B cell (primary cell): ENCODE measurements at regions of chr4 and their contacts with region 1.

Region 1: GRCh38 chr4:112765317-112765975 is 128.5 kb downstream of the LARP7 start:
- DNase-seq: peak; percentile 43
- ATAC-seq: peak; percentile 41
- H3K4me3 ChIP-seq: no peak overlapping the region
- H3K4me3 Mint-ChIP-seq: no peak overlapping the region
- H3K27ac ChIP-seq: no peak overlapping the region
- H3K27ac Mint-ChIP-seq: no peak overlapping the region
- H3K4me1 ChIP-seq: no peaks in the 10 kb centered on the region
- H3K4me1 Mint-ChIP-seq: no peaks in the 10 kb centered on the region
- H3K27me3 ChIP-seq: no peaks in the 10 kb centered on the region
- H3K27me3 Mint-ChIP-seq: peaks cover 4% of the 10 kb centered on the region
- CTCF ChIP-seq: peak; percentile 74

Region 2: DNA sequence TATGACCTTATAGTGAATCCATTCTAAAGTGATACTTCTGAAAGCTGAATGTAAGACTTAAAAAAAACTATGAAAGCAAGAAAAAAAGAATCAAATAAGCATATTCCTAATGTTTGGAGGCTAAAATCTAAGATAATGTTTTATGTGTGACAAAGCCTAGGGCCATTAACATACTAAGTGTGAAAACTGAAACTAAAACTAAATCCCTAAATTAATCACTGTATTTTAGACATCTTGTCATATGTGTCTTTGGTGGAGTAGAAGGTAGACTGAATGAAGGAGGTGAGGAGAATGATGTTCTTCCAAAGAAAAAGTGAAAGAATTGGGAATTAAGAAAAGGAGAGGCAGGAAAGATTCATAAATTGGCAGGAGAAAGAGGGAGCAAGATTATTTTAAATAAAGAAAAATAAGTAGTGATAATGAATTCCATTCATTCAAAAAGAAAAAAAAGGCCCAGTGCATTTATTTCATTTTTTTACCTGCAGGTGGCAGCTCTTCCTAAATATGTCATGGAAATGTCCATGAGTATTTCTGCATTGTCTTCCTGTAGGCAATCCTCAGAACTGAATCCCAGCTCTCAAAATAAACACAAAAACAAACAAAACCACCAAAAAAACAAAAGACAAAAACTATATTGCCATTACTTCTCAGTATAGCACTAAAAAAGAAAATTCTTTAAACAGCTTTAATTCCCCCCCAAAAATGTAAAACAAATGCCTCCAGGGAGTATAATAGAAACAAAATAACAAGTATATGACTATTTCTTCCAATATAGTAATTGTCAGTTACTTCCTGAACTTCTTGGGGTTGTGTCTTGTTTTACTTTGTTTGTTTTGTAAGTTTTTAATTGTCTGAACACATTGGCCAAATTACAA is 550.8 kb before region 1 on chr4:
- CTCF ChIA-PET with region 1: interaction called, 7 read pairs
- POLR2A ChIA-PET with region 1: no interaction called
- intact Hi-C with region 1: loop called (anchors 10 kb)
- DNase-seq: peak; percentile 38
- ATAC-seq: no peak
- H3K4me3 ChIP-seq: no peak overlapping the region
- H3K4me3 Mint-ChIP-seq: no peak overlapping the region
- H3K27ac ChIP-seq: no peak overlapping the region
- H3K27ac Mint-ChIP-seq: no peak overlapping the region
- H3K4me1 ChIP-seq: no peaks in the 10 kb centered on the region
- H3K4me1 Mint-ChIP-seq: no peaks in the 10 kb centered on the region
- H3K27me3 ChIP-seq: no peaks in the 10 kb centered on the region
- H3K27me3 Mint-ChIP-seq: no peaks in the 10 kb centered on the region
- CTCF ChIP-seq: peak; percentile 70

Region 3: DNA sequence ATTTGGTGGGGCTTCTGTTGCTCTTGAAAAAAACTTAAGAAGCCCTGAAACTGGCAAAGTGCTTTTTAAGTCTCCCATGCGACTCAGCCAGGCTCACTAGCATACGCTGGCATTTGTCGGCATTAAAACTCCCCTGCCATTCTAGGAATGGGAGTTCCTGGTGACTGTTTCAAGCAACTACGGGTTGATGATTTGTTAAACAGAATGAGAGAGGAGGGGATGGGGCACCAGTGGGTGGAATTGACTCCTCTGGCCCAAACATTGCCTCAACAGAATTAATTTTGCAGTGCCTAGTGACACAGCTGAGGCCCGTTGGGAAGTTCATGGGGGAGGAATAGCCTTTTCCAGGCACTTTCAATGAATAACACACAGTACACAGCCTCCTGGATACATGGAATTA is 279.6 kb before region 1 on chr4:
- CTCF ChIA-PET with region 1: no interaction called
- POLR2A ChIA-PET with region 1: no interaction called
- intact Hi-C with region 1: no loop called
- DNase-seq: no peak
- ATAC-seq: no peak
- H3K4me3 ChIP-seq: no peak overlapping the region
- H3K4me3 Mint-ChIP-seq: no peak overlapping the region
- H3K27ac ChIP-seq: no peak overlapping the region
- H3K27ac Mint-ChIP-seq: no peak overlapping the region
- H3K4me1 ChIP-seq: no peaks in the 10 kb centered on the region
- H3K4me1 Mint-ChIP-seq: no peaks in the 10 kb centered on the region
- H3K27me3 ChIP-seq: peaks cover 0 to 13% (median 3%) of the 10 kb centered on the region in 4 experiments
- H3K27me3 Mint-ChIP-seq: peaks cover 17% of the 10 kb centered on the region
- CTCF ChIP-seq: no peak

Region 4: DNA sequence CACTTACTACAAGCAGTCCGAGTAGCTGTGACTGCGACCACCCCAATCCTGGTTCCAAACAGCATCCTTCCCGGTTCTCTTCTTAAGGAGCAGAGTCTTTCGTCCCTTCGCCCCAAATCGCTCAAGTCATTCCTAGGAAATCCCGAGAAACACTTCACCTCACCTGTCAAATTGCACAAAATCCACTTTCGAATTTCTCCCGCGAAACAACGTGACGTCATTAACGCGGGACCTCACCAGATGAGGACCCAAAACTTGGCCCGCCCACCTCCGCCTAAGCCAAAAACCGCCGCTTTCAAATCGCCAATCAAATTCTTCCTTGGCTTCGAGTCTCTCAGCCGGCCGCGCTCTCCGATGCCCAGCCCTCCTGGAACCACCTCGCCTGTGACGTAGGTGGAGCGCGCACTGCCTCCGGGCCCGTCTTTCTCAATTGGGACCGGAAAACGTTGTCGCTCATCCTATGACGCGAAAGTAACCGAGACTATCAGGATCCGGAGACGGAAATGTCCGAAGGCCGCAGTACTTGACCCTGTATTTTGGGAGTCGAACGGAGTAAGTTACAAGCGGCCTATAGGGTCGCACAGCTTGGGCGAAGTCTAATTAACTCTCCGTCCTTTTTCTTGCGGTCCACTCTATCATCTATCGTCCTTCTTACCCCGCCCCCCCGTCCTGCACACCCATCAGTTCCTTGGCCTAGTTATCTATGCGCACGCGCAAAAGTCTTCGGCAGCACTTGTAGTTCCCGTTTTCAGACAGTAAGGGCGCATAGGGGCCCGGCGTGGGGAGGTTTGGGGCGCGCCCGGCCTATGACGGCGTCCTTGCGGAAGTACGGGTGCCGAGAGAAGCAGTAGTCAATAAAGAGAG is 128.5 kb before region 1 on chr4 and contains the starts of genes LARP7 and ZGRF1:
- CTCF ChIA-PET with region 1: interaction called, 78 read pairs
- POLR2A ChIA-PET with region 1: no interaction called
- intact Hi-C with region 1: loop called (anchors 1 kb)
- DNase-seq: peak; percentile 99
- ATAC-seq: peak; percentile 86
- H3K4me3 ChIP-seq: peak within 1 kb of the TSS; percentile 54 to 94 (median 74)
- H3K4me3 Mint-ChIP-seq: no peak within 1 kb of the TSS
- H3K27ac ChIP-seq: peak within 1 kb of the TSS; percentile 84 to 97
- H3K27ac Mint-ChIP-seq: no peak within 1 kb of the TSS
- H3K4me1 ChIP-seq: peaks cover 13 to 19% of the 10 kb centered on the region in 2 donors
- H3K4me1 Mint-ChIP-seq: peaks cover 22% of the 10 kb centered on the region
- H3K27me3 ChIP-seq: no peaks in the 10 kb centered on the region
- H3K27me3 Mint-ChIP-seq: no peaks in the 10 kb centered on the region
- CTCF ChIP-seq: peak; percentile 92
- total RNA-seq, gene LARP7: 57.4 and 62.2 TPM in 2 replicates
- total RNA-seq, gene ZGRF1: 13.0 and 18.6 TPM in 2 replicates

Region 5: GRCh38 chr4:112775801-112776200 is 10.4 kb after region 1 on chr4:
- CTCF ChIA-PET with region 1: interaction called, 10 read pairs
- POLR2A ChIA-PET with region 1: no interaction called
- intact Hi-C with region 1: no loop called
- DNase-seq: no peak
- ATAC-seq: no peak
- H3K4me3 ChIP-seq: no peak overlapping the region
- H3K4me3 Mint-ChIP-seq: no peak overlapping the region
- H3K27ac ChIP-seq: no peak overlapping the region
- H3K27ac Mint-ChIP-seq: no peak overlapping the region
- H3K4me1 ChIP-seq: no peaks in the 10 kb centered on the region
- H3K4me1 Mint-ChIP-seq: no peaks in the 10 kb centered on the region
- H3K27me3 ChIP-seq: no peaks in the 10 kb centered on the region
- H3K27me3 Mint-ChIP-seq: no peaks in the 10 kb centered on the region
- CTCF ChIP-seq: no peak

Region 6: GRCh38 chr4:112968451-112969159 is 203.2 kb after region 1 on chr4:
- CTCF ChIA-PET with region 1: no interaction called
- POLR2A ChIA-PET with region 1: no interaction called
- intact Hi-C with region 1: no loop called
- DNase-seq: no peak
- ATAC-seq: no peak
- H3K4me3 ChIP-seq: no peak overlapping the region
- H3K4me3 Mint-ChIP-seq: no peak overlapping the region
- H3K27ac ChIP-seq: no peak overlapping the region
- H3K27ac Mint-ChIP-seq: no peak overlapping the region
- H3K4me1 ChIP-seq: no peaks in the 10 kb centered on the region
- H3K4me1 Mint-ChIP-seq: no peaks in the 10 kb centered on the region
- H3K27me3 ChIP-seq: no peaks in the 10 kb centered on the region
- H3K27me3 Mint-ChIP-seq: peaks cover 5% of the 10 kb centered on the region
- CTCF ChIP-seq: no peak